ENCODE measurements at regions of chr16 and their contacts with region 1.

Region 1: DNA sequence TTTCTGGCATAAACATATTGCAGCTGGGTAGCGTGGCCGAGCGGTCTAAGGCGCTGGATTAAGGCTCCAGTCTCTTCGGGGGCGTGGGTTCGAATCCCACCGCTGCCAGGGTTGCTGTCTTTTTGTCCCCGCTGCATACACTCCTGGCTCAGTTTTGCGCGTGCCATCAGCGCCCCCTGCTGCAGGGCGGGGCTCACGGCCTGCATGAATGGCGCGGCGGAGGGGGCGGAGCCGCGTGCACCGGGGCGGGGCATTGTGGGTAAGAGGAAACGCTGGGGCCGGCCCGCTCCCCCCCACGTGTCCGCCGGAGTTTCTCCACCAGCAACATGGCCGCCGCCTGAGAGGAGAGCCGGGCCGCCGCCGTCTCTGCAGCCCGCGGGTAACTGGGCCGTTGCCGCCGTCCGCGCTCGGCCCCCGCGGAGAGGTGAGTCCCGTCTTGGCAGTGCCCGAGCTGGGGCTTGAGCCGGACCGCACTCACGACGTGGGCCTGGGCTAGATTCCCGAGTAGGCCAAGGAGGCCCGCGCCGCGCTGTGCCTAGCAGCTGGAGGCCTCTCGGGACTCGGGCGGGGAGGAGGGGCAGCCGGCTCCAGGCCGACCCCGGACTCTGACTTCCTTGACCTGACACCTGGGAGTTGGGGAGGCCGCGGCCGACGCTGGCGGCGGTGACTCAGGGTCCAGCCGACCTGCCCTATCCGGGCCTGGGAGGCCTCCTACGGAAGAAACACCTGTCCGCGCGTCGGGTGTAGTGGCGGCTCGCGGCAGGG is at the start of gene POLR3E:
- DNase-seq: peak; percentile 100
- H3K4me3 Mint-ChIP-seq: peak within 1 kb of the TSS; percentile 90
- H3K27ac Mint-ChIP-seq: peak within 1 kb of the TSS; percentile 94
- H3K4me1 Mint-ChIP-seq: peaks cover 37% of the 10 kb centered on the region
- H3K27me3 Mint-ChIP-seq: no peaks in the 10 kb centered on the region
- total RNA-seq, gene POLR3E: 72.9 to 74.7 TPM

Region 2: DNA sequence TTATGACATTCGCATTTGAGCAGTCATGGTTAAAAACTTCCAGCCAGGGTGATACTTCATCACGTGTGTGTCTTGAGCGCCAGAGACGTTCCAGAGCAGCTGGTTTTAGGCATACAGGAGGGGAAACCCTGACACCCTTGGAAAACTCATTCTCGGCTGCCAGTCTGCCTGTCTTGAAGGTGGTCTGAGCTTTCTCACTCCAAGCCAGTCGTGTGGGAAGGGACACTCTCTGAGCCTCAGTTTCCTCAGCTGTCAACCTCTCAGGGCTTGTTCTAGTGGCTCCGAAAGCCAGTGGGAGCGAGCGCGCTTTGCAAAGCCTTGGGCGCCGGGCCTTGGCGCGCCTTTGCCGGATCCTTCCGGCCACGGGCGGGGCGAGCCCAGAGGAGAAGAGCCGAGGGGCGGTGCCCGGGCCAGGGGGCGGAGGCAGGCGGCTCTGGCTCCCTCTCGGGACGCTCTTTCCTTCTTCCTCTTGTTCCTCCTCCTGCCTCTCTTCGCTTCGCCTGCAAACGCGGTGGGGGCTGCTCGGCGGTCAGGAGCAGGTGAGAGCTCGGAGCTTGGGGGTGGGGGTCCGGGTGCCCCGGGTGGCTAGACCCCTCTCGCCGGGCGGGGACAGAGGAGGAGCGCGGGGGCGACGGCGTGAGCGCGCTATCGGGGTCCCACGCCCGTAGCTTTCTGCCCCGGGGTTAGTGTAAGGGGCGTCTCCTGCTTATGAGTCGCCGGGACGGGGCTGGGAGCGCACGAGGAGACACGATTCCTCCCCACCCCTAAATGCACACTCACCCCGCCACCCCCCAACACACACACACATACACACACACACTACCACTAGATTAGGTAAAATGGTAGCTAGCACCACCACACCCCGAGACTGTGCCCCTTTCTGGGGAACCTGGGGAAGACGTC is 1138.8 kb before region 1 on chr16 and contains the start of gene LDAF1:
- CTCF ChIA-PET with region 1: no interaction called
- intact Hi-C with region 1: loop called (anchors 1 kb)
- DNase-seq: peak; percentile 86
- H3K4me3 Mint-ChIP-seq: peak within 1 kb of the TSS; percentile 88
- H3K27ac Mint-ChIP-seq: no peak within 1 kb of the TSS
- H3K4me1 Mint-ChIP-seq: peaks cover 26% of the 10 kb centered on the region
- H3K27me3 Mint-ChIP-seq: no peaks in the 10 kb centered on the region
- total RNA-seq, gene LDAF1: 13.3 to 14.5 TPM

Region 3: DNA sequence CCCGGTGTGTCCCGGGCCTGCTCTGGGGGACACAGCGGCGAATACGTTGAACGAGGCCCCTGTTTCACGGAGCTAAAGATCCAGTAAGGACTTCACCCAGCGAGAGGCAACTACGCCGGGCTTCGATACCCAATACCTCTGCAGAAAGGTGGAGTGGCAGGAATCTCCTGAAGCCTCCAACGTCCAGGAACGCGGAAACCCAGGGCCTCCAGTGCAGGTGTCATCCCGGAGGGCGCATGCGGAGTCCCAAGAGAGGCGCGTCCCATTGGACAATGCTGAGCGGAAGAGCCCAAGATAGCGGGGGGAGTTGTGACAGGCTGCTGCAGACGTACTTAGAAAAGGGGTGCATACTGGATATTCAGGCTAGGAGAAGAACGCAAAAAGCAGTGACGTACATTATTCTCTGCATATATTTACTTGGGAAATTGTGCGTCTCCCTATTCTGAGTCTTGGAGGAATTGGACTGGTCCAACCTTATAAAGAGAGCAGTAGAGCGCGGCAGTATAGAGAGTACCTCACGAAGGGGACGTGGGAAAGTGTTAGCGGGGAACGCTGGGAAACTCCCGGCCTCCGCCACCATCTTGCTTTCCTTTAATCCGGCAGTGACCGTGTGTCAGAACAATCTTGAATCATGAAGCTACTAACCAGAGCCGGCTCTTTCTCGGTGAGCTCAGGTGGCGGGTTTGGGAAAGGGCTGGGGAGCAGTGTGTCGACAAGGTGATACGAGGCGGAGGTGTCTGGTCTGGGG is 344.3 kb before region 1 on chr16 and contains the start of gene UQCRC2:
- CTCF ChIA-PET with region 1: no interaction called
- intact Hi-C with region 1: loop called (anchors 1 kb)
- DNase-seq: peak; percentile 93
- H3K4me3 Mint-ChIP-seq: peak within 1 kb of the TSS; percentile 95
- H3K27ac Mint-ChIP-seq: peak within 1 kb of the TSS; percentile 97
- H3K4me1 Mint-ChIP-seq: peaks cover 56% of the 10 kb centered on the region
- H3K27me3 Mint-ChIP-seq: no peaks in the 10 kb centered on the region
- total RNA-seq, gene UQCRC2: 356 to 378 TPM

Region 4: GRCh38 chr16:22098405-22099255 is 198.7 kb before region 1 on chr16:
- CTCF ChIA-PET with region 1: no interaction called
- intact Hi-C with region 1: loop called (anchors 1 kb)
- DNase-seq: no peak
- H3K4me3 Mint-ChIP-seq: peak overlapping the region; percentile 28
- H3K27ac Mint-ChIP-seq: no peak overlapping the region
- H3K4me1 Mint-ChIP-seq: no peaks in the 10 kb centered on the region
- H3K27me3 Mint-ChIP-seq: peaks cover 5% of the 10 kb centered on the region

Region 5: DNA sequence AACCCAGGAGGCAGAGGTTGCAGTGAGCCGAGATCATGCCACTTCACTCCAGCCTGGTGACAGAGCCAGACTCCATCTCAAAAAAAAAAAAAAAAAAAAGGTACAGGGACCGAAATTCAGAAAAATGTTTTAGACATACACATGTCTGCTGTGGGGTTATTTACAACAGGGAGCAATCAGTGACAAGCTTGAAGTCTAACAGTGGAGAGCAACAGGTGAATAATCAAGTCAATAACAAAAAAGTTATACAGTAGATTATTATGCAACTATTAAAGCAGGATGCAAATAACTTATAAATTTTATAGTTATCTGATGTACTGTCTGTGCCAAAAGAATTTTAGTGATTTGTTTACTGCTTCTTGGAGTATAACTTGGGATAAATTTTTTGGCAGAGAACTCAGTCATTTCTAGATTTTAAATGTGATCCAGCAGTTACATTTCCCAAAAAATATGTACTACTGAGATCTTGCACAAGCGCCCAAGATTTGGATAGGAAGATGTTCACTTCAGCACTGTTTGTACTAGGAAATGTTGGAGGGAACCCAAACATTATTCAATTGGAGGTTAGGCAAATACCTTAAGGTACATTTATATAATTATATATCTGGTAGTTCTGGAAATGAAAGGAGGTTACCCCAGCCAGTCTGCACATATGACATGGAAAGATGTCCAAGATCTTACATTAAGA is 57.1 kb before region 1 on chr16:
- CTCF ChIA-PET with region 1: no interaction called
- intact Hi-C with region 1: loop called (anchors 2 kb)
- DNase-seq: no peak
- H3K4me3 Mint-ChIP-seq: no peak overlapping the region
- H3K27ac Mint-ChIP-seq: peak overlapping the region; percentile 36
- H3K4me1 Mint-ChIP-seq: peaks cover 28% of the 10 kb centered on the region
- H3K27me3 Mint-ChIP-seq: no peaks in the 10 kb centered on the region